Activated CD8-positive, alpha-beta memory T cell treated with anti-CD3 and anti-CD28 coated beads, Interleukin-2, amount 10 ng/mL, durations not matched to agents 7 days and 5 days (primary cell): ENCODE measurements at regions of chr4 and their contacts with region 1.

Region 1: DNA sequence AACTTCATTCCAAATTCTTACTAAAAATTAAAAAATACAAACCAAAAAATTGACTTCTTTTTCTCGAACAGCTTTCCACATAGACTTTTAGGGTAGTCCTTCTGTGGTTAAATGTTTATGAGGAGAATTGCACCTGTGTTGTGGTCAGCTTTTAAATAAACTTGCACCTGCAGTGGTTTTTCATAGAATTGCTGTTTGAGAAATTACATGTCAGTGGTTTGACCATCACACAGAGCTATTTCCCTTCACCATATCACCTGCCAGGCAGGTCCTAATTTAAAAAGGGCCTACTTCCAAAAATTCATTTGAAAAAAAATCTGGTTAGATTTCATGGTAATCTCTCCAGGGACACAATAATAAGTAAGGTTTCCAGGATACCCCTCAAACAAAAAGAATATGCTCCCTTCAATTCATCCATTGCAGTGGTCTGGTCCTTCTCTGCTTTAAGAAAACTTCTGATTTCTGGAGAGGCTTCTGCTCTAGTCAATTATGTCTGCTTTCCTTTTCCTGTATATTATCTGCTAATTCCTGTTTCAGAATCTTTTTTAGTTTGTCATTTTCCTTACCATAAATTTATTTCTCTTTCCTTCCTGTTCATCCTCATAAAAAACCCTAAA is 9.8 kb upstream of the UTP3 start:
- DNase-seq: no peak
- ATAC-seq: peak; percentile 12
- H3K4me3 Mint-ChIP-seq: peak overlapping the region; percentile 22
- H3K27ac Mint-ChIP-seq: peak overlapping the region; percentile 61
- H3K4me1 Mint-ChIP-seq: peaks cover 31% of the 10 kb centered on the region
- H3K27me3 Mint-ChIP-seq: peaks cover 14% of the 10 kb centered on the region

Region 2: GRCh38 chr4:70667740-70668535 is 10.6 kb before region 1 on chr4:
- CTCF ChIA-PET with region 1: interaction called, 10 read pairs
- DNase-seq: no peak
- ATAC-seq: no peak
- H3K4me3 Mint-ChIP-seq: no peak overlapping the region
- H3K27ac Mint-ChIP-seq: no peak overlapping the region
- H3K4me1 Mint-ChIP-seq: peaks cover 2% of the 10 kb centered on the region
- H3K27me3 Mint-ChIP-seq: peaks cover 14% of the 10 kb centered on the region